HAP-1 (cell line): ENCODE measurements at regions of chr14 and their contacts with region 1.

Region 1: GRCh38 chr14:55707365-55707804 is 127.4 kb downstream of the KTN1 start:
- DNase-seq: peak in 1 of 2 experiments; percentile 40
- H3K4me3 ChIP-seq: no peak overlapping the region
- H3K4me1 ChIP-seq: no peaks in the 10 kb centered on the region; the same call in 1 of the 2 replicates
- H3K27me3 ChIP-seq: no peaks in the 10 kb centered on the region

Region 2: DNA sequence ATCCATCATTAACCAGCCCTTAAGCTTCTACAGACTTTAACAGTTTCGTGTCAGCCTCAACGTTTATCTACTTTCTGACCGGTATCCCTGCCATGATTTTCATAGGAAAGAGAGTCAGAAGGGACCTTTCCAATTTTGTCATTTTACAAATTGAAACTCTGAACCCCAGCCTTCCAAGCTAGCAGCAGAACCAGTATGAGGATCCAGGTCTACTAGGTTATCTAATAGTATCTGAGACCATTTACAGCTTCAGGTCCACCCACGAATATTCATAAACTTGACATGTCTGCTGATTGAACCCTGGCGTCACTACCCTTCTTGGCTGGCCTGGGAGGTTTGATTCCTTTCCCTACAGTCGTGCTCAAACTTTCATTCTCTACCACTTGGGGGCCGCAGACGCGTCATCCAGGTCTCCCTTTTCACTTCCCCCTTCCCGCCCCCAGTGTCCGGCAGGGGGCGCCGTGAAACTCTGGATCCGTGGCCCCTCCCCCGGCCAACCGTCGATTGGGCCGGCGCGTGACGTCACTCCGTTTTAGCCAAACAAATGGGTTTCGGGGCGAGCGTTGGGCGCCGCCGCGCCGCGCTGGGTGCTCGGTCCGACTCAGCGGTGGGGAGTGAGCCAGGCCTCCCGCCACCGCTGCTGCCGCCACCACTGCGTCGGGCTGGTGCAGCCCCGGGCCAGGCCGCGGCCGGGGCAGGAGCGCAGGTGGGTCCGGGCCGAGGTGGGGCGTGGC is 436.4 kb before region 1 on chr14 and contains the start of gene FBXO34:
- in situ Hi-C with region 1: no loop called
- DNase-seq: peak; percentile 93 to 99
- H3K4me3 ChIP-seq: peak within 1 kb of the TSS; percentile 87
- H3K4me1 ChIP-seq: peaks cover 25% of the 10 kb centered on the region
- H3K27me3 ChIP-seq: no peaks in the 10 kb centered on the region

Region 3: DNA sequence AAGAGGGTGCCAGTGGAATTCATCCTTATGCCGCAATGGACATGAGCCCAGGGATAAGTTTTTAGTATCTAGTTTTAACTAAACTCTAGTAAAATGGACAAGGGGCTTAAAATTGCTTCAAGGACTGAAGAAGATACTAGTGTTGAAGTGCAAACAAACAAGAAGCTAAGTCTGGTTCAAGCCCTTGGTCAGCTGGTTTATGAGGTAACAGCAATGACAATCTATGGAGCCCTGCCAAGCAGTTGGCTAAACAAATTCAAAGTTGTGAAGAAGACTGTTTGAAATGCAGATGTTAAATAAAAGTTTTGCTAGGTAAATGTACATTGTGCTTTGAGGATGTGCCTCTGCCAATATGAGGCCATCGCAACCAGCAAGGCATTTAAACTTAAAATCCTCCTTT is 82.0 kb after region 1 on chr14:
- in situ Hi-C with region 1: no loop called
- DNase-seq: no peak
- H3K4me3 ChIP-seq: no peak overlapping the region
- H3K4me1 ChIP-seq: no peaks in the 10 kb centered on the region
- H3K27me3 ChIP-seq: no peaks in the 10 kb centered on the region

Region 4: DNA sequence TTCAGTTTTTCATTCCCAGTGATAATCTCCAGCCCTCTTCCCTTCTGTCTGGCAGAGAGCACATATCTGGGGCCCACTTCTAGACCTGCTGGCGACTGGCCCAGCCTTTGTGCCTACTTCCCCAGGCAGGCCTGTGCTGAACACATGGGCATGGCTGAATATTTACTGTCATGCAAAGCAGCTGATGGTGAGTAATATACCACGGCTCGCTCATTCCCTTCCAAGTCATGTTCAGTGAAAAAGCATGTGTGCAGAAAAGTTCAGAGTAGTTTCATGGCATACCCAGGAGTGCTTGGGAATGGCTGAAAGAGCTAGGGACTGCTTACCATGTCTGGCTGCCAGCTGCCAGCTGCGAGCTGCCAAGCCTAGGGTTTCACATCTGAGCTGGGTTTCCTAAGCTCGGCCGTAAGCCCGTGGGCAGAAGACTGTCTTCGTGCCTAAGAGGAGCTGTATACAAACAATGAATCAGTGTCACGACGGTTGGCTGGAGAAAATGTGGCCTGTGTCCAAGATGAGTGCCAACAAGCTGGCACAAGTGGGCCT is 230.9 kb after region 1 on chr14:
- in situ Hi-C with region 1: no loop called
- DNase-seq: no peak
- H3K4me3 ChIP-seq: no peak overlapping the region
- H3K4me1 ChIP-seq: peaks cover 7% of the 10 kb centered on the region
- H3K27me3 ChIP-seq: no peaks in the 10 kb centered on the region

Region 5: DNA sequence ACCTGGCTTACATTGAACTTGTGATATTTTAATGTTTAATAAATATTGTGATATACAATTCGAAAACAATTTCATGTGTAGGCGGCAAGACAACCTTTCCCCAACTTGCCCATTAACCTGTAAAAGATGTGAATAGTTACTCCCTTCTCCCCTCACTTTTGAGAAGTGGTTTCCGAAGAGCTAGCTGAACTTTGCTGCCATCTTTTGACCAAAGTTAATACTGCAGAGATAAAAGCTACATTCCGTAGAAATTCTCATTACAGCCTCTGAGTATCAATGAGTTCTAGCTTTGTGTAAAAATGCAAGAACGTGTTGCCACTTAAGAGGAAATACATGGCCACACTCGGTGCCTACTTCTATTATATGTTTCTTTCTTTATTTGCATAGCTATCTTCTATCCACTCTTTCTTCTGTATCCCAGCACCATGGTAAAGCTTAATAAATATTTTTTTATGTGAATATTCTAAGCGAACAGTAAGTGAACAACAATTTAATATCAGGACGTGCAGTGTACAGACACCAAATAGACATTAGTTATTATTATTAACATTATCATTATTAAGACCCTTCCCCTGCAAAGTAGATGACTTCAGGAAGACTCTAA is 767.1 kb after region 1 on chr14:
- in situ Hi-C with region 1: loop called (anchors 10 kb)
- DNase-seq: peak; percentile 23 to 62
- H3K4me3 ChIP-seq: no peak overlapping the region
- H3K4me1 ChIP-seq: no peaks in the 10 kb centered on the region
- H3K27me3 ChIP-seq: no peaks in the 10 kb centered on the region